Caco-2 (cell line): ENCODE measurements at regions of chr18 and their contacts with region 1.

Region 1: DNA sequence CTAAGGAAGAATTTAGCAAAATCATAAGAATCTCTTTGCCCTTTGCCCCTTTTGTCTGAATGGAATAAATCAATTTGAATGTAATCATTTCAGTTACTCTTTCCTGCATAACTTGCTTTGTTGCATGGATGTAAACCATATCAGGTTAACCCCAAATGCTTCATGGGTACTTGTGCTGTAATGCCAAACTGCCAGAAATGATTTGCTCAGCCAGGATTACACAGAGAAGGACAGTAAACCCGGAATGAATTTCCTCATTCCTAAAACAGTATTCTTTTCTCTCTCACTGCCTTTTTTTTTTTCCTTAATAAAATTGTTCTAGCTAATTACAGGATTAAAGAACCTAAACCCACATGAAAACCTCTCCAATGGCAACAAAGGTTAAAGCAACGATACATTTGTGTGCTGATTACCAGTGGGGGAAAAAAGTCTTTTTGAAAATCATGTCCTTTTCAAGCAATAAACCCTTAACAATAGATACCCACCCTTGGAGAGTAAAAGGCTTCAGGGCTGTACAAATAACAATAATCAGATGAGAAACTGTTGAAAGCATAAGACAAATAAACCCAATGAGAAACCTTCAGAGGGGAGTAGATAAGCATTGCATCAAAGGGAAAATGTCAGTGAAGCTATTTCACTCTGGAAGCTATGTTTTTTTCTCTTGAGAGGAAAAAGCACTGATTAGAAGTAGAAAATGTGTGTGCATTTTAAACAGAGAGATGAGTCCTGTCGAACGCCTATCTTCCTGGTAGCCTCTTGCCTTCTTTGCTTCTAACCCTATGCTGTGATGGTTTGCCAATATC is 275.3 kb downstream of the CDH2 start:
- DNase-seq: peak in 1 of 2 experiments; percentile 52
- H3K4me3 ChIP-seq: no peak overlapping the region
- H3K4me3 Mint-ChIP-seq: no peak overlapping the region
- H3K27ac Mint-ChIP-seq: no peak overlapping the region
- H3K4me1 ChIP-seq: peaks cover 17% of the 10 kb centered on the region
- H3K4me1 Mint-ChIP-seq: peaks cover 18% of the 10 kb centered on the region
- H3K27me3 ChIP-seq: no peaks in the 10 kb centered on the region
- H3K27me3 Mint-ChIP-seq: no peaks in the 10 kb centered on the region
- CTCF ChIP-seq: no peak

Region 2: DNA sequence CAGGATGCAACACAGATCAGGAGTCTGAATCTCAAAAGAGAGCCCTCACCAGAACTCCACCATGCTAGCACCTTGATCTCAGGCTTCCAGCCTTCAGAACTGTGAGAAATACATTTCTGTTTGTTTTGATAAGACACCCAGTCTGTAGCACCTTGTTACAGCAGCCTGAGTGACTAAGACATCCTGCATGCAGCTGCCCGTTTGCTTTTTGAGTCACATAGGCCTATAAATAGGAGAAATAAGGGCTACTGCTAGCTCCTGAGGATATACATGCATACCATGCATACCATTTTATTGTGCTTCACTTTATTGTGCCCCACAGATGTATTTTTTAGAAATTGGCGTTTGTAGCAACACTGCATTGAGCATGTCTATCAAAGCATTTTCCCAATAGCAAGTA is 62.5 kb before region 1 on chr18:
- CTCF ChIA-PET with region 1: no interaction called
- POLR2A ChIA-PET with region 1: no interaction called
- intact Hi-C with region 1: loop called (anchors 2 kb)
- DNase-seq: peak; percentile 12 to 44
- H3K4me3 ChIP-seq: no peak overlapping the region
- H3K4me3 Mint-ChIP-seq: no peak overlapping the region
- H3K27ac Mint-ChIP-seq: no peak overlapping the region
- H3K4me1 ChIP-seq: no peaks in the 10 kb centered on the region
- H3K4me1 Mint-ChIP-seq: no peaks in the 10 kb centered on the region
- H3K27me3 ChIP-seq: no peaks in the 10 kb centered on the region
- H3K27me3 Mint-ChIP-seq: no peaks in the 10 kb centered on the region
- CTCF ChIP-seq: no peak

Region 3: GRCh38 chr18:27845897-27846296 is 55.7 kb before region 1 on chr18:
- CTCF ChIA-PET with region 1: no interaction called
- POLR2A ChIA-PET with region 1: no interaction called
- intact Hi-C with region 1: loop called (anchors 2 kb)
- DNase-seq: no peak
- H3K4me3 ChIP-seq: no peak overlapping the region
- H3K4me3 Mint-ChIP-seq: no peak overlapping the region
- H3K27ac Mint-ChIP-seq: no peak overlapping the region
- H3K4me1 ChIP-seq: peaks cover 12% of the 10 kb centered on the region; the same call in 1 of the 2 replicates
- H3K4me1 Mint-ChIP-seq: peaks cover 14% of the 10 kb centered on the region
- H3K27me3 ChIP-seq: no peaks in the 10 kb centered on the region
- H3K27me3 Mint-ChIP-seq: no peaks in the 10 kb centered on the region
- CTCF ChIP-seq: no peak